Activated CD8-positive, alpha-beta T cell treated with anti-CD3 and anti-CD28 coated beads for 36 hours (primary cell): ENCODE measurements at regions of chr16 and their contacts with region 1.

Region 1: GRCh38 chr16:24789881-24790280 is 55.9 kb upstream of the SLC5A11 start:
- DNase-seq: no peak
- ATAC-seq: no peak
- H3K4me3 Mint-ChIP-seq: no peak overlapping the region
- H3K27ac Mint-ChIP-seq: no peak overlapping the region
- H3K4me1 Mint-ChIP-seq: peaks cover 2% of the 10 kb centered on the region
- H3K27me3 Mint-ChIP-seq: no peaks in the 10 kb centered on the region
- CTCF ChIP-seq: no peak

Region 2: GRCh38 chr16:24568392-24568791 is 221.5 kb before region 1 on chr16:
- CTCF ChIA-PET with region 1: no interaction called
- POLR2A ChIA-PET with region 1: no interaction called
- intact Hi-C with region 1: loop called (anchors 10 kb)
- DNase-seq: no peak
- ATAC-seq: no peak
- H3K4me3 Mint-ChIP-seq: no peak overlapping the region
- H3K27ac Mint-ChIP-seq: no peak overlapping the region
- H3K4me1 Mint-ChIP-seq: no peaks in the 10 kb centered on the region
- H3K27me3 Mint-ChIP-seq: no peaks in the 10 kb centered on the region
- CTCF ChIP-seq: no peak

Region 3: GRCh38 chr16:24810951-24811843 is 21.3 kb after region 1 on chr16:
- CTCF ChIA-PET with region 1: no interaction called
- POLR2A ChIA-PET with region 1: no interaction called
- intact Hi-C with region 1: no loop called
- DNase-seq: no peak
- ATAC-seq: no peak
- H3K4me3 Mint-ChIP-seq: no peak overlapping the region
- H3K27ac Mint-ChIP-seq: no peak overlapping the region
- H3K4me1 Mint-ChIP-seq: no peaks in the 10 kb centered on the region
- H3K27me3 Mint-ChIP-seq: no peaks in the 10 kb centered on the region
- CTCF ChIP-seq: no peak